ENCODE measurements at regions of chr17 and their contacts with region 1.

Region 1: GRCh38 chr17:80189611-80190010 is 19.8 kb downstream of the CARD14 start:
- DNase-seq: no peak
- H3K4me3 ChIP-seq: no peak overlapping the region
- H3K27ac ChIP-seq: no peak overlapping the region
- H3K4me1 ChIP-seq: no peaks in the 10 kb centered on the region
- H3K27me3 ChIP-seq: no peaks in the 10 kb centered on the region
- CTCF ChIP-seq: no peak
- POLR2A ChIP-seq: no peak

Region 2: DNA sequence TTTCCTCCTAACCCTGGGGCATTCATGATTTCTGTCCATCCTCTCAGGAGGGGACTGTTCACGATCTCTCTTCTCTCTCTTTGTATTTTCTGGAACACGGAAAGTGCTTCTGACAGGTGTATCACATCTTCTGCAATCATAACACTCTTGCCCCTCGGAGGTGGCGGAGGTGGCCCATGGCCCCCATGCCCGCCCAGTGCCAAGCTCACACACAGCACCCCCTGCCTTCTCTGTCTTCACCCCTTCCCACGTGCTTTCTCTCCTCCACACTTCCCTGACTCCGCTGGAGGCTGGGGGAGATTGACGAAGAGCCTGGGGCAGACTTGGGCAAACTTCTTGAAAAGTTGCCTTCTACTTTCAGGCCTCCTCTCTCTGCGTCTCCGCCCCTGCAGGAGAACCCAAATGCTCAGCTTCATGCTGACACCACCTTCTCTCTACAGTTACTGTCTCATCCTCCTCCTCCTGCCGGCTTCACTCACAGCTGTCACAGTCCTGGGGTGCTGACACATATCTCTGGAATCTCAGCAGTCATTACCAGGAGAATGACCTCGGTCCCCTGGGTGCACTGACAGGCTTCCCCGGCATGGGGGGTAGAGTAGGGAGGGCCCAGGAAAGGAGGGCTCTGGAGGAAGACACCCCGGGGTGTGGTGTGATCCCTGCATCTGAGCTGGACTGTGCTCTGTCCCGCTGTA is 987.9 kb before region 1 on chr17:
- intact Hi-C with region 1: no loop called
- DNase-seq: no peak
- H3K4me3 ChIP-seq: no peak overlapping the region
- H3K27ac ChIP-seq: no peak overlapping the region
- H3K4me1 ChIP-seq: no peaks in the 10 kb centered on the region
- H3K27me3 ChIP-seq: peaks cover 0 to 91% of the 10 kb centered on the region in 2 donors
- CTCF ChIP-seq: no peak
- POLR2A ChIP-seq: no peak

Region 3: GRCh38 chr17:80117491-80118401 is 71.9 kb before region 1 on chr17:
- intact Hi-C with region 1: no loop called
- DNase-seq: no peak
- H3K4me3 ChIP-seq: no peak overlapping the region
- H3K27ac ChIP-seq: no peak overlapping the region
- H3K4me1 ChIP-seq: no peaks in the 10 kb centered on the region
- H3K27me3 ChIP-seq: no peaks in the 10 kb centered on the region
- CTCF ChIP-seq: no peak
- POLR2A ChIP-seq: no peak

Region 4: GRCh38 chr17:80147035-80147836 is 42.4 kb before region 1 on chr17 and contains the start of gene EIF4A3:
- intact Hi-C with region 1: loop called (anchors 1 kb)
- DNase-seq: peak; percentile 98 to 99
- H3K4me3 ChIP-seq: peak within 1 kb of the TSS; percentile 94 to 100 (median 96)
- H3K27ac ChIP-seq: peak within 1 kb of the TSS; percentile 96 to 98
- H3K4me1 ChIP-seq: peaks cover 3 to 12% of the 10 kb centered on the region in 2 donors
- H3K27me3 ChIP-seq: no peaks in the 10 kb centered on the region
- CTCF ChIP-seq: no peak
- POLR2A ChIP-seq: peak; percentile 64
- total RNA-seq, gene EIF4A3: 46.2 to 93.1 (median 67.9) TPM

Region 5: GRCh38 chr17:80169784-80170500 is 19.7 kb before region 1 on chr17 and contains the start of gene CARD14:
- intact Hi-C with region 1: no loop called
- DNase-seq: peak; percentile 87 to 89
- H3K4me3 ChIP-seq: peak within 1 kb of the TSS in 2 of 3 donors; percentile 48 to 63
- H3K27ac ChIP-seq: peak within 1 kb of the TSS; percentile 81 to 89
- H3K4me1 ChIP-seq: no peaks in the 10 kb centered on the region
- H3K27me3 ChIP-seq: no peaks in the 10 kb centered on the region
- CTCF ChIP-seq: no peak
- POLR2A ChIP-seq: peak; percentile 43
- total RNA-seq, gene CARD14: 0.32 to 13.8 (median 9.4) TPM

Region 6: DNA sequence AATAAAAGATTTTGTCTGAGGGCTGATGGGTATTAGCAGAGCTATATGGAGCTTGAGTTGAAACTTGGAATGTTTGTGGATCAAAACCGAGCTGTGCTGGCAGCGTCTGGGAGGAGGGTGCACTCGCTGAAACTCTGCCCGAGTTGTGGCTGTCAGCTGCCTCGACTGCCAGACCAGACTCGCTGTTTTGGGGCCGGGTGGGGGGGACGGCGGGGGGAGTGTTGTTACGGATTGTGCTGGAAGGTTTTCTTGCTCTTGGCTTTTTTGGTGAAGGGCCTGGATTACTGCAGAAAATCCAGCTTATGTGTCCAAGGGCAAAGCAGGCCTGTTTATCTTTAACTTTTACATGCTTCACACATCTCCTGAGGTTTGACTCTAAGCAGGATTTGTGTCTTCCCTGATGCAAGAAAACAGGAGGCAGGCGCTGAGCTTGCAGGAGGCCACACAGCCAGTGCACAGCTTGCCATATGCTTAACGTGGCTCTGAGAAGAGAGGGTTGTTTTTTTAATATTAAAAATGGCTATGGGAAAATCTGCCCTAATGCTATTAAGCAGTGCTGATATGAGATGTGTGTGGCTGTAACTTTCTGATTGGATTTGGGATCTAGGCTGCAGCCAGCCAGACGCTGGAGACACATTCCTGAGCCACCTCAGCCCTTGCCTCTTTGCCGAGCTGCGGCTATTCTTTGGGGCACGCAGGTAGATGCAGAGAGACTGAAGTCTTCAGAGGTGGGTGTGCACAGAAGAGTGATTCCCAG is 334.5 kb after region 1 on chr17:
- intact Hi-C with region 1: no loop called
- DNase-seq: no peak
- H3K4me3 ChIP-seq: no peak overlapping the region
- H3K27ac ChIP-seq: no peak overlapping the region
- H3K4me1 ChIP-seq: no peaks in the 10 kb centered on the region
- H3K27me3 ChIP-seq: peaks cover 0 to 7% of the 10 kb centered on the region in 2 donors
- CTCF ChIP-seq: no peak
- POLR2A ChIP-seq: no peak

Measured in breast epithelium (tissue), 4 donors.